Cardiac septum (tissue), 1 donor: ENCODE measurements at regions of chr16 and their contacts with region 1.

Region 1: DNA sequence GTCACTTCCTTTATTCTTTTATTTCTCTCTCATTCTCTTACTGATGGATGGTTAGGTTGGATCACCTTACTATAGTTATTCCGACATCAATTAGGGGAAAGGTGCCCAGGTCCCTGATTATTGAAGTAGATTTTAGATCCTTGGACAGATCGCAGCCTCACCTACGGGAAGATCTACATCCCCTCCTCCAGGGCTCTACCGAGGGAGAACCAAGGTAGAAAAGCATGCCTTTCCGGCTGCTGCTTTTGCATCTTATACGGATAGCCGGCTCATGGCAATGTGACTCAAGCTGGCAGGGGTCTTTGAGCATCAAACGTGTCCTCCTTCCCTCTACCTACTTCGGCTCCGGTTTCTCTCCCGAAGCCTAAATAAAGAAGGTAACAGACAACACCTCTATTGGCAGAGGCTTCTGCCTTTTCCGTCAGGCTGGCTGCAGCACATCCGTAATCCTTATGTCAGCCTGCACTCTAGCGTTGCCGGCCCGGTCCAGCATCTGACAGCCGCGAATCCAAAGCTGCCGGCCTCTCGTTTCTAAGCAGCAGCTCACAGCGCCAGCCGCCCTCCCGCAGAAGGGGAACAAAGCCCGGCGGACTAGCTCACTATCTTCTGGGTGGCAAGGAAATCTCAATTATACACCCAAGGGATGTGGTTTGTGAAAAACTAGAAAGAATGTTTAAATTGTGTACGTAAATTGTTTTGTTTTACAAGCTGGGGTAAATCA is 46.9 kb downstream of the IRX6 start:
- DNase-seq: peak; percentile 85

Region 2: DNA sequence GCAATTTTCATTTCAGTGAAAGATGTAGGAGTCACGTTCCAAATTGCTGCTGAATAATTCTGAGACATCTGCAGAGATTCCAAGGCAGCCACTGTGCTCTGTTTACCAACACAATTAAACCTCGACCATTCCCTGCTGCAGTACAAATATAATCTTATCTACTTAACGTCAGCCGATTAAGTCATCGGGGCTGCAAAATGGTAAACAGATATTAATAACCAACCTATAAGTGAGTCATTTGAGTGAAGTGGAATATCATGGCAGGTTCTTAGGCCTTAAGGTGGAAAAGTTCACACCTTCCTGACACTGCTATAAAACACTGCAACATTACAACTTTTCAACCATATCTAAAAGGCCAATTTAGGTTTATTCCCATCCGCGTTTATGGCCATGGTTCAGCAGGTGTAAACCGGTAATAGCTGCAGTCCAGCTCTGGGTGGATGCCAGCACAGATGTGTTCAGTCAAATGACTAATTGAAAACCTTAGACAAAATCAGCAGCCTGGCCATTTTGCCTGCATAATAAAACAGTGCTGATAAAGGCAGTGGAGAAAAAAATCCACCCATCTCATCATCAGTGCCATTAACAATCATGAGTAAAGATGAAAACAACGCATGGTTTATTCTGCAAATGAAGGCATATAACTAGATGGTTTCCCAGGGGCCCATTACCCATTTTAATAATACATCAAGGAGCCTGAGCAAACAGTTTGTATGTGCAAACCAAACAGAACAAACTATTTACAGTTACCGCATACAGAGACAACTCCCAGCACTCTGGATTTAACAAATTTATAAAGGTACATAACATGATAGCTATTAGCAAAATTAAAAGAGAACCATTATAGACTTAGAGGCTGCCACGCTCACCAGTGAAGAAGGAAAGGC is 881.5 kb before region 1 on chr16:
- intact Hi-C with region 1: loop called (anchors 10 kb)
- DNase-seq: no peak

Region 3: GRCh38 chr16:54936979-54937670 is 433.8 kb before region 1 on chr16:
- intact Hi-C with region 1: loop called (anchors 5 kb)
- DNase-seq: no peak

Region 4: DNA sequence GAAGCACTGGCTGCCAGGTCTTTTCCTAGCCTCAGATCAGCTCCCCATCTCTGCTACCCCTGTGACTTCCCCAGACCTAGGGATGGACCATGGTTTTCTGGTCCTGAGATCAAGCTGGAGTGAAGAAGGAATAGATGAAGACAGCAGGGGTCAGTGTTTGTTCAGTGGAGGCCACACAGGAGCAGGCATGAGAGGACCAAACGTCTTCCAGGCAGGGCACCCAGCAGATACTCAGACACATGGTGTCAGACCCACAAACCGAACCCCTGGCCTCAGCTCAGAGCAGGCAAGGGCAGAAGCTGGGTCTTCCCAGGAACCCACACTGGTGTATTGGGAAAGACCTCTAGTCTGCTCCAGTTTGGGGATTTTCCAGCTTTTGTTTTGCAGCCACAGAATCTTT is 250.5 kb before region 1 on chr16:
- intact Hi-C with region 1: loop called (anchors 5 kb)
- DNase-seq: no peak

Region 5: DNA sequence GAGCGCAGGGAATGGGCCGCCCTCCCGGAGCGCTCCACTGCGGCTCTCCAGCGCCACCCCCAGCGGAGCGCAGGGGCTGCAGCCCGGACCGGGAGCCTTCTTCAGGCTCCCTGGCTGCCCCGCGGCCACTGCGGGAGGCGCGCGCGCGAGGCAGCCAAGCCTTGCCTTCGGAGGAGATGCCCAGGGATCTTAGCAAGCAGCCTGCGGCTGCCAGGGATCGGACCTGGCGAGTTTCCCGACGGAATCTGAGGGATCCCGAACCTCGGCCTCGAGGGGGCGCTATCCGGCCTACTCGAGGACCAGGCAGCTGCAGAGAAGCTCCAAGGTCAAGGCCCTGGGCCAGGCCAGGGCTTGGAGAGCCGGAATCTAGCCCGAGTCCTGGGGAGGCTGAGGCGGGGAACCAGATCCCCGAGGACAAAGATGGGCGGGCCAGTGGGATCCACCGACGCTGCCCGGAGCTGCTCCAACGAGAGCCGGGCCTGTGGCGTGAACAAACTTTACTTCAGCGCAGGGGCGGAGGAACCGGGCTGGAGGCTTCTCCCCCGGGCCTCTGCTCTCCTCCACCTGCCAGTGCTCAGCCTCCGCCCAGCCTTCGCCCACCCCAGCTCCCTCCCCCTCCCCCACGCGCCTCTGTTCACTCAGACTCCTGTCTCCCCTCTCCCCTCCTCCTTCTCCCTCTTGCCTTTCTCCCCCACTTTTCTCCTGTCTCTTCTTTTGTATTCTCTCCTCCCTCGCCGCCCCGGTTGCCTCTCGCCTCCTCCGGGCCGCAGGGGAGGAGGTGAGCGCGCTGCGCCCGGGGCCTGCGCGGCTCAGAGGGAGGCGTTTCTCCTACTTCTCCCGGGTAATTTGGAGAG is 47.1 kb before region 1 on chr16 and contains the start of gene IRX6:
- intact Hi-C with region 1: loop called (anchors 2 kb)
- DNase-seq: peak; percentile 87
- total RNA-seq, gene IRX6: 37.1 TPM

Region 6: DNA sequence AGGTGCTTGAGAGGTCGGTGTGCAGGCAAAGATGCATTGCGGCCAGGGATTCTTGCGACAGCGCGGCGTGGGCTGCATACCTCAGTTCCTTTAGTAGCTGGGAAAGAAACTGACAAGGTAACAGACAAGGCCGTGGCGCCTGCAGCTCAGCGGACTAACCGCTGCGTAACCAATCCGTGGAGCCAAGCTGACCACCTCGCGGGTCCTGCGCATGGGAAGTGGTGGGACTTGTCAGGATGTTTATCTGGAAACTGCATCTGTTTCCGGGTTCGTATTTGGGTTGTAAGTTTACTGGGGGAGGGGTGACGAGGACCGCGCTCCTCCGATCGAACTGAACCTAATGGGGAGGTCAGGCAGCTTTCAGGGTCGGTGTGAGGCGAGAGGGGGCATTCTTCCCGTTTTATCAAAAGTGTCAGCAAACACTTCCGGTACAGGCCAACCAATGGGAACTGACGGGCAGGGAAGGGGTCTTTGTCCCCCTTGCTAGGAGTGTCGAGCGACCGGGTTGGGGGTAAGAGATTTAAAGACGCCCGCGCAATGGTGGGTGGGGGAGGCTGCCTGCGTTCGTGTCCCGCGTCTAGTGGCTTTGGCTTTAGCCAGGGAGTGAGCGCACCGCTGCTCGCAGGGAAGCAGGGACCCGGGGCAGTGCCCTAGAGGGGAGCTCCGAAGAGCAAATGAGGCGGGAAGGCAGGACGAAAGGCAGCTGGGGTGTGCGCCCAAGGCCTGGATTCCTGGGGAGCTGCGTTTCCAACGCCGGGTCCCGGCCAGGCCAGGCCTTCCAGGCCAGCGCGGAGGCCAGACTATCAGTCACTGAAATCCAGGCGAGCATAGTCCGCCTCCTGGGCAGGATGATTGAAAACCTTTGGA is 39.9 kb before region 1 on chr16:
- intact Hi-C with region 1: loop called (anchors 2 kb)
- DNase-seq: no peak

Region 7: DNA sequence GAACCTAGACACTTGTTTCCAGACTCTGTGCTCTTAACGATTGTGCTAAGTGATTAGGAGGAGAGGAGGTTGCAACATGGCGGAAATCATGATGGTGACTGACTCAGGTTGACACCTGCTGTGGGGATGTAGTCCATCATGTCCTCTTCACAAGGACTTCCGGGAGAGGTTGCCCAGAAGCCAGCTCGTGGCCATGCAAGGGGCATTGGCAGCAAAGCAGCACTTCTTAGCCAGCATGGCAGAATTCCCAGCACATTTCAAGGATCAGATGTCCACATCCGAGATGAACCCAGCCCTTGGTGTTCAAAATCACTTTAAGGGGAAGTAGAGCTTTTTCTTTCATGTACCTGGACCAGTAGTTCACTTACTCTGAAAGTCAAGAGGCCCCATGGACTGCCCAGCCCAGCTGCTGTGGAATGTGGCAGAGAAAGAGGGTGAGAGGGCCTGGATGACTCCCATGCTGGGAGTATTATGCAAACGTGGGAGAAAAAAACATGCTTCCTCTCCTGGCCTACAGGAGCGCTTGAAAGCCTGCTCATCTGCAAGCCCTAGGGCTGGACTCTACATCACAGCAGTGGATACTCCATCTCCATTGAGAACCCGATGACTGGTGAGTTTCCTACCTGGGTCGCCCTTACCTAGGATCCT is 18.6 kb after region 1 on chr16:
- intact Hi-C with region 1: loop called (anchors 2 kb)
- DNase-seq: no peak